PC-9 (cell line): ENCODE measurements at regions of chr5 and their contacts with region 1.

Region 1: GRCh38 chr5:168268949-168269943 is 22.2 kb upstream of the WWC1 start:
- DNase-seq: peak; percentile 87 to 98
- H3K4me3 ChIP-seq: peak overlapping the region; percentile 47; the same call in 1 of the 2 replicates
- H3K27ac ChIP-seq: peak overlapping the region; percentile 67
- H3K4me1 ChIP-seq: peaks cover 18% of the 10 kb centered on the region
- H3K27me3 ChIP-seq: no peaks in the 10 kb centered on the region
- CTCF ChIP-seq: peak; percentile 97

Region 2: GRCh38 chr5:167582283-167582682 is 687.0 kb before region 1 on chr5:
- CTCF ChIA-PET with region 1: no interaction called
- POLR2A ChIA-PET with region 1: no interaction called
- intact Hi-C with region 1: loop called (anchors 5 kb)
- DNase-seq: no peak
- H3K4me3 ChIP-seq: no peak overlapping the region
- H3K27ac ChIP-seq: no peak overlapping the region
- H3K4me1 ChIP-seq: no peaks in the 10 kb centered on the region
- H3K27me3 ChIP-seq: peaks cover 5% of the 10 kb centered on the region
- CTCF ChIP-seq: peak; percentile 54

Region 3: DNA sequence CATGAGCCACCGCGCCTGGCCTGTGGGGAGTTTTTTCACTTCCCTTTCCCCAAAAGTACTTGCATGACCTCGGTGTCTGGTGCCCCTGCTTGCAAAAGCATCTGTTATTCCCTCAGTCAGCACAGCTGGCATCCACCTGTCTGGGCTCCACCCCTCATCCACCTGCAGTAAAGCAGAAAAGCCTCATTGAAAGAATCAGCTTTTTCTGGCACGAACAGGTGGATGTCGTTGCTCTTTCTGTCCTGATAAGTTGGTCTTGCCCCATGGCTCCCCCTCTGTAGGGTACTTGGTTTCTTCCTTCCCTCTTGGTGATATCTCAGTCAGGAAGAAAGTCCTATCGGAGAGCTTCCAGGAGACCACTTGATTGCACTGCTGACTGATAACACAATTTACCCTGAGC is 59.6 kb after region 1 on chr5:
- CTCF ChIA-PET with region 1: interaction called, 5 read pairs
- POLR2A ChIA-PET with region 1: no interaction called
- intact Hi-C with region 1: loop called (anchors 1 kb)
- DNase-seq: peak in 1 of 2 experiments; percentile 65
- H3K4me3 ChIP-seq: peak overlapping the region; percentile 39; the same call in 1 of the 2 replicates
- H3K27ac ChIP-seq: peak overlapping the region; percentile 78
- H3K4me1 ChIP-seq: peaks cover 99% of the 10 kb centered on the region
- H3K27me3 ChIP-seq: no peaks in the 10 kb centered on the region
- CTCF ChIP-seq: no peak

Region 4: DNA sequence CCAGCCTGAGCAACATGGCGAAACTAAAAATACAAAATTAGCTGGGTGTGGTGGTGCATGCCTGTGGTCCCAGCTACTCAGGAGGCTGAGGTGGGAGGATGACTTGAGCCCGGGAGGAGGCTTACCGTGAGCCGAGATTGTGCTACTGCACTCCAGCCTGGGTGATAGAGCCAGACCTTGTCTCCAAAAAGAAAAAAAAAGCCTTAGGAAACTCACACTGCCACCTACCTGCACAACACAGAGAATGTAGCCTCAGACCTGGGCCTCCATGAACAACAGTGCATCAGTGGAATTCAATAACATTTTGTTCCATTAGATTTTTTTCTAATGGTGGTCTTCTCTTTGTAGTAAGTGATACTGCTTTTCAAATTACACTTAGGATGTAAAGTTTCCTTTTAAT is 153.2 kb after region 1 on chr5:
- CTCF ChIA-PET with region 1: interaction called, 4 read pairs
- POLR2A ChIA-PET with region 1: no interaction called
- intact Hi-C with region 1: loop called (anchors 1 kb)
- DNase-seq: no peak
- H3K4me3 ChIP-seq: no peak overlapping the region
- H3K27ac ChIP-seq: no peak overlapping the region
- H3K4me1 ChIP-seq: no peaks in the 10 kb centered on the region
- H3K27me3 ChIP-seq: no peaks in the 10 kb centered on the region
- CTCF ChIP-seq: peak; percentile 62

Region 5: DNA sequence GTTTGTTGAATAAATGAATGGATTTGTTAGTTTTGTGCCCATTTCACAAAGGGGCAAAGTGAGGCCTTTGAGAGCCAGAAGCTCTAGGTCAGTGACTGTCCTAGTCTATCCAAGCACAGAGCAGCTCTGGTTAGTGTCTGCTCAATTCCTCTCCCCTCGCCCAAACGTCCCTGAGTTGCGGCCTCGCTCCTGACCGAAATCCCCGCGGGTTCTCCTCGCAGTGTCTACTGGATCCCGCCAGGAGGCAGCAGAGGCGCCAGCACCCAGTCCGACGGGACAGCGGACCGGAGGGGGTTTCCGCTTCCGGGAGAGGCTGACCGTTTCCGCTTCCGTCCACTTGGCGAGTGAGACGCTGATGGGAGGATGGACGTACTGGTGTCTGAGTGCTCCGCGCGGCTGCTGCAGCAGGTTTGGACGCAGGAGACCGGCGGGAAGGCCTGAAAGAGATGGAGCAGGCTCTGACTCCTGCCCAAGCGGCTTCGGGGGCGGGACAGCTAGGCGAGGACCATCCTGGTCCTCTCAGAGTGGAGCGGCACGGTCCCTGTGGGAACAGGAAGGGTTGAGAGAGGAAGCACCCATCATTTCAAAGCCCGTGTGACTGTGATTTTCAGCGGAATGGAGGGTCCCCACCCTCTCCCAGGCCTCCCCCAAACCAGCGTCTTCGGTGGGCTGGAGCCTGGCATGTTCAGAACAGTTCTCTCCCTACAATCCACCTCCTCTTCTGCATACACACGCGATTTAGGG is 217.1 kb after region 1 on chr5 and contains the start of gene RARS1:
- CTCF ChIA-PET with region 1: interaction called, 3 read pairs
- POLR2A ChIA-PET with region 1: no interaction called
- intact Hi-C with region 1: loop called (anchors 1 kb)
- DNase-seq: peak; percentile 86 to 94
- H3K4me3 ChIP-seq: peak within 1 kb of the TSS; percentile 83
- H3K27ac ChIP-seq: peak within 1 kb of the TSS; percentile 35; the same call in 1 of the 2 replicates
- H3K4me1 ChIP-seq: peaks cover 11% of the 10 kb centered on the region
- H3K27me3 ChIP-seq: no peaks in the 10 kb centered on the region
- CTCF ChIP-seq: peak; percentile 88
- total RNA-seq, gene RARS1: 101 and 125 TPM in 2 replicates

Region 6: DNA sequence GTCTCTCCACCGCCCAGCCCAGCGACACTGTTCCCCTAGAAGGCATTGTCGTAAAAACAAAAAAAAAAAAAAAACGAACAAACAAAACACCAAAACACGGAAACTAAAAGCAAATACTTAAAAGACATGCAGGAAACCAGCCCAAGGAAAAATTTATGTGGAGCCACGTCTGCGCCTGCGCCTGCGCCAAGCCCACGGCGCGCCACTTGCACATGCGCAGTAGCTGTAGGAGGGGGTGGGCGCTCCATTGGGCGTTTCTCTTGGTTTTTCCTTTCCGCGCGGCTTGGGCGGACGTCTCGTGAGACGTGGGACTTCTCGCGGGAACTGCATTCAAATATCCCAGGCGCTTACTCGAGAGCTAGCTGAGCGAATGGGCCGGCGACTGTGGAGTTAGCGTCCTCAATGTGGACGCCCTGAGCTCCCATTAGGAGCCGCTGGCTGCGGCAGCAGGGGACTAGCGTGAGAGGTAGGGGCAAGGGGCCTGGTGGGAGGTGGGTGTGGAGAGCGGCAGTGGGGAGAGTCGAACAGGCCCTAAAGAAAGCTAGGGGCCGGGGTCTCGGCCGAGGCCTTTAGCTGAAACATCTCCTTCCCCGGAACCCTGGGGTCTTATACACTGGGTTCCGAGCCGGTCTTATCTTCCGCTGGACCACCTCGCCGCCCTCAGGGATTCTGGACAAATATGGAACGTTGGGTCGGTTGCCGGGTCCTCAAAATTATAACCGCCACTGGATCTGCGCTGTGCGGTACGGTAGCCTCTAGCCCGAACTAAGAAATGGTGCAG is 1314.4 kb after region 1 on chr5 and contains the start of gene SPDL1:
- CTCF ChIA-PET with region 1: no interaction called
- POLR2A ChIA-PET with region 1: no interaction called
- intact Hi-C with region 1: loop called (anchors 10 kb)
- DNase-seq: peak; percentile 87 to 96
- H3K4me3 ChIP-seq: peak within 1 kb of the TSS; percentile 95
- H3K27ac ChIP-seq: peak within 1 kb of the TSS; percentile 60
- H3K4me1 ChIP-seq: peaks cover 14% of the 10 kb centered on the region
- H3K27me3 ChIP-seq: no peaks in the 10 kb centered on the region
- CTCF ChIP-seq: no peak
- total RNA-seq, gene SPDL1: 30.5 and 39.2 TPM in 2 replicates